Activated T-helper 1 cell treated with anti-CD3 and anti-CD28 coated beads, Interleukin-12 subunit alpha, Interleukin-12 subunit beta, Interleukin-2, Interleukin-4 antibody, amounts not matched to agents 30 ng/mL and 10 ng/mL and 1 ng/mL, durations not matched to agents 14 hours and 24 hours and 36 hours (primary cell): ENCODE measurements at regions of chr5 and their contacts with region 1.

Region 1: GRCh38 chr5:61202213-61202612 is 39.9 kb upstream of the SMIM15 start:
- DNase-seq: no peak
- H3K4me3 Mint-ChIP-seq: no peak overlapping the region
- H3K27ac Mint-ChIP-seq: peak overlapping the region; percentile 7
- H3K4me1 Mint-ChIP-seq: peaks cover 11% of the 10 kb centered on the region
- H3K27me3 Mint-ChIP-seq: peaks cover 5% of the 10 kb centered on the region

Region 2: GRCh38 chr5:60972231-60972630 is 230.0 kb before region 1 on chr5:
- intact Hi-C with region 1: loop called (anchors 1 kb)
- DNase-seq: no peak
- H3K4me3 Mint-ChIP-seq: no peak overlapping the region
- H3K27ac Mint-ChIP-seq: no peak overlapping the region
- H3K4me1 Mint-ChIP-seq: no peaks in the 10 kb centered on the region
- H3K27me3 Mint-ChIP-seq: no peaks in the 10 kb centered on the region

Region 3: DNA sequence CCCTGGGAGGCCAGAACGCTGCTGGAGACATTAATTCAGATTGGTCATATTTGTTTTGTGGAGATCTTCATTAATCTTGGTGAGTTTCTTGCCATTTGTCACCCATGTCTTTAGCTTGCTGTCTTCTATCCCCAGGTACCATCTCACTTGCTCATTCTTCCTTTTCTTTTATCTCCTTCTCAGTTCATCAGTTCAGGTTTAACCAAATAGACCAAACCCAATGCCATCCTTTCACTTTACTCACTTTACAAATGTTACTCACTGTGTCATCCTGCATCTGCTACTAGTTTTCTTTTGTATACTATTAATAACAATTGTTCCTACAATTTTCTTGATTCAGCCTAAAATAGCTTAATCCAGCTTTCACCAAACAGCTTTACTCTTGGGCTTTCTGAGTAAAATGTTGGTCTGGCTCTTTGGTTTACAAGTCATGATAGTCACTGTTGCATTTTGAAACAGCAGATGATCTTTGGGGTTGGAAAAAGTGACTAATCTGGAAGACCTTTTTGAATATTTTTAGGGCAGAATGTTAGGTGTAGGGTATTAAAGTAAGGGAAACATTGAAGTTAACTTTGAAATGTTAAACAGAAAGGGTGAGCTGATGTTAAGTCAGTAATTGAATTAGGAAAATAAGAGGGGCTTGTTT is 376.8 kb after region 1 on chr5:
- intact Hi-C with region 1: loop called (anchors 1 kb)
- DNase-seq: no peak
- H3K4me3 Mint-ChIP-seq: no peak overlapping the region
- H3K27ac Mint-ChIP-seq: no peak overlapping the region
- H3K4me1 Mint-ChIP-seq: no peaks in the 10 kb centered on the region
- H3K27me3 Mint-ChIP-seq: peaks cover 7% of the 10 kb centered on the region